PC-3 (cell line): ENCODE measurements at regions of chr19 and their contacts with region 1.

Region 1: DNA sequence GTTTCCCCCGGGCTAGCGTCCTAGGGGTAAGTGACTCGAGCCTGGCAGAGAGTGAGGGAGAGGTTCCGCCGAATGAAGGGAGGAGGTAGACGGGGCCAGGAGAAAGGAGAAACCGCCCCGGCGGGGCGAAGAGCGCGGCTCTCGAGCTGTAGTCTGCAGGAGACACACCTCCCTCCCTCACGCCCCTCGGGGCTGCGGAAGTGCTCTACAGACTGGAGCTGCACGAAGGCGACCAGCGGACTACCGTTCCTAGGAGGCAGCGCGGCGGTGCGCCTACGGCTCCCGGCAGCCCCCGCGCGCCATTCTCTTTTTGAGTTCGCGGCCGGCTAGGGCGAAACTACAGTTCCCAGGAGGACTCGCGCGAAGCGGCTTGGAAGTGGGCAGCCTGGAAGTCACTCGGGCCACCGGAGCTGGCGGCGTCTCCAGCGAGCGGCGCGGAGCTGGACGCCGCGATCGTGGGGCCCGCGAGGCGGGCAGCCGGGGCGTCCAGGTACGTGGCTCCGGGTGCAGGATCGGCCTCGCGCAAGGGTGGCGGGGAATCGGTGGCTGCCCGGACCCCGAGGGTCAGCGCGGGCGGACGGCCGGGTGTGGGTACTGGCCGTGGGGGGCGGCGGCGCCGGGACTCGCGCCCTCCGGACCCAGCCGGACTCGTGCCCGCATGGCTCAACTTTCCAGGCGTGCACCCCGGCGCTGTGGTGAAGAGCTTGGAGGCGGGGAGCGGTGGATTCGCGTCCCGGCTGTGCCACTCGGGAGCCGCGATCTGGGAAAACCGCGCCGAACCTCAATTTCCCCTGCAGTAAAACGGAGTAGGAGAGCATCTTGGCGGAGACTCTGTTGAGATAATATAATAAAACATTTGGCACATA is at the start of gene SIPA1L3:
- DNase-seq: peak; percentile 95
- ATAC-seq: peak; percentile 90
- H3K4me3 ChIP-seq: peak within 1 kb of the TSS; percentile 95
- H3K27ac ChIP-seq: peak within 1 kb of the TSS; percentile 67
- H3K4me1 ChIP-seq: peaks cover 21% of the 10 kb centered on the region
- H3K27me3 ChIP-seq: no peaks in the 10 kb centered on the region
- CTCF ChIP-seq: no peak
- total RNA-seq, gene SIPA1L3: 38.7 and 56.3 TPM in 2 replicates

Region 2: DNA sequence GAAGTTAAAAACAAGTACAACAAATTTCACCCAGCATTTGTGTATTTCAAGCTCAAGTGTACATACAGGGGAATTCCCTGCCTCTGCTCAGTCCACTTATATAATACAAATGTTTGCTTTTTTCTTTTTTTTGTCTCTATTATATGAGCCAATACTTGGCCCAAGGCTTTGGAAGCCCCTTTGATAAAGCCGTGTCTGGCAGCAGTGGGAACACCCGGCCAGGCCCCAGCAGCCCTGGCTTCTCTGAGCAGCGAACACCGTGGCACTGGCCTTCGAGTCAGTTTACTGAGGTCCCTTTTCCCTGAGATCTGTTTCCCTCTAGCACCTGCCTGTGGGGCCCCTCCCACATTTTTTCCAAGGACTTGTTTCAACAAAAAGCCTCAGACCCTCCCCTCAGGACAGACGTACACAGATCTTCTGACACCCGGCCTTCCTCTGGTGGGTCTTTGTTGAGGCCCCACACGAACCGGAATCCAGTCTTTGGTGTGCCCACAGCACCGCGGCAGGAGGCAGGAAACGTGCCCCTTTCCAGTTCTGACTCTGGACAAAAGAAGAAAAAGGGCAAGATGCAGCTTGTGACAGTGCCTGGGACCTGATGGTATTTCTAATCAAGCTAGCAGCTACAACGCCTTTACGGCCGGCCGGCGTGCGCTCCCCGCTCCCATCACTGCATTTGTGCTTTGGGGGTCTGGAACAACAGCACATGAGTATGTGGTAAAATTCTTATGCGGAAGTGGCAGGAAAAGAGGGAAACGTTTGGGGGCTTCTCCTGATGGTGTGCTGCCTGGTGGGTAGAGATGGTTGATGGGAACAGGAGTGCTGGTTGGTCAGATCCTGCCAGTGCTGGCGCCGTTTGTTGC is 13.7 kb after region 1 on chr19:
- CTCF ChIA-PET with region 1: no interaction called
- POLR2A ChIA-PET with region 1: no interaction called
- intact Hi-C with region 1: no loop called
- DNase-seq: no peak
- ATAC-seq: no peak
- H3K4me3 ChIP-seq: no peak overlapping the region
- H3K27ac ChIP-seq: no peak overlapping the region
- H3K4me1 ChIP-seq: no peaks in the 10 kb centered on the region
- H3K27me3 ChIP-seq: no peaks in the 10 kb centered on the region
- CTCF ChIP-seq: no peak

Region 3: DNA sequence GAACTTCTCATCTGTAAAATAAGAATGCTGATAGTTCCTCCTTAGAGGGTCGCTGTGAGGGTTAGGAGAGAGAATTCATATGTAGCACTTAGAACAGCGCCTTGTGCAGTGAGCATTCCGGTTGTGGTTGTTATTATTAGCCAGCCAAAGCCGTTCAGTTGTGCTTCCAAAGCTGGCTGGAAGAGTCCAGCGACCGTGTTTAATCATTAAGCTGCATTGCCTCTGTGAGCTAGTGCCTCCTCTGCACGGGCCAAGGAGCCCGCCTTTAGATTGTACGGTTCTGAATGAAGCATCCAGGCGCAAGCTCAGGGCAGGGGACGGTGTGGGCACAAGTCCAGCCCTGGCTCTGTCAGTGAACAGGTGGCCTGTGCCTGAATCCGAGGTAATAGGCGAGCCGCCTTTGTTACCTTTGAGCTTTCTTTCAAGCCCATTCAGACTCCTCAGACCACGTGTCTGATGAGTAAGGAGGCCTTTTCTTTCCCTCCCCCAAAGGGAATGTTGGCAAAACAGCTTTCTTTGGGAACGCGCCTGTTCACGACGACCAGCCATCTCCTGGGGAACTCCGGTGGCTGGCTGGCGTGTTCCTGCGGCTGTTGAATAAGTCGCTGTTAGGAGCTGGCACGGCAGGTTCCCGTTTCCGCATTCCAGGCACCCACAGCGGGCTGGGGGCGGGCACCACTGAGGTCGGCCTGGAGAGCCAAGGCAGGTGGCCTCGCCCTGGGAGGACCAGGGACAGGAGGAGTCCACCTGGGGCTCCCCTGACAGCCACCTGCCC is 25.0 kb after region 1 on chr19:
- CTCF ChIA-PET with region 1: interaction called, 3 read pairs
- POLR2A ChIA-PET with region 1: interaction called, 5 read pairs
- intact Hi-C with region 1: loop called (anchors 2 kb)
- DNase-seq: peak; percentile 92
- ATAC-seq: peak; percentile 73
- H3K4me3 ChIP-seq: peak overlapping the region; percentile 64
- H3K27ac ChIP-seq: peak overlapping the region; percentile 87
- H3K4me1 ChIP-seq: peaks cover 38% of the 10 kb centered on the region
- H3K27me3 ChIP-seq: no peaks in the 10 kb centered on the region
- CTCF ChIP-seq: no peak

Region 4: GRCh38 chr19:37997911-37998344 is 90.8 kb after region 1 on chr19:
- CTCF ChIA-PET with region 1: no interaction called
- POLR2A ChIA-PET with region 1: no interaction called
- intact Hi-C with region 1: loop called (anchors 2 kb)
- DNase-seq: peak; percentile 97
- ATAC-seq: peak; percentile 48
- H3K4me3 ChIP-seq: no peak overlapping the region
- H3K27ac ChIP-seq: peak overlapping the region; percentile 96
- H3K4me1 ChIP-seq: peaks cover 31% of the 10 kb centered on the region
- H3K27me3 ChIP-seq: no peaks in the 10 kb centered on the region
- CTCF ChIP-seq: no peak

Region 5: GRCh38 chr19:38004521-38005223 is 97.6 kb after region 1 on chr19:
- CTCF ChIA-PET with region 1: interaction called, 8 read pairs
- POLR2A ChIA-PET with region 1: interaction called, 24 read pairs
- intact Hi-C with region 1: loop called (anchors 2 kb)
- DNase-seq: peak; percentile 72
- ATAC-seq: peak; percentile 28
- H3K4me3 ChIP-seq: no peak overlapping the region; the same call in 1 of the 2 replicates
- H3K27ac ChIP-seq: peak overlapping the region; percentile 100
- H3K4me1 ChIP-seq: peaks cover 35% of the 10 kb centered on the region
- H3K27me3 ChIP-seq: no peaks in the 10 kb centered on the region
- CTCF ChIP-seq: no peak

Region 6: GRCh38 chr19:38044267-38045111 is 137.4 kb after region 1 on chr19:
- CTCF ChIA-PET with region 1: interaction called, 11 read pairs
- POLR2A ChIA-PET with region 1: no interaction called
- intact Hi-C with region 1: no loop called
- DNase-seq: peak; percentile 13
- ATAC-seq: no peak
- H3K4me3 ChIP-seq: no peak overlapping the region
- H3K27ac ChIP-seq: no peak overlapping the region
- H3K4me1 ChIP-seq: peaks cover 7% of the 10 kb centered on the region
- H3K27me3 ChIP-seq: no peaks in the 10 kb centered on the region
- CTCF ChIP-seq: peak; percentile 47

Region 7: GRCh38 chr19:38245826-38246498 is 338.9 kb after region 1 on chr19:
- CTCF ChIA-PET with region 1: no interaction called
- POLR2A ChIA-PET with region 1: interaction called, 11 read pairs
- intact Hi-C with region 1: no loop called
- DNase-seq: no peak
- ATAC-seq: no peak
- H3K4me3 ChIP-seq: no peak overlapping the region
- H3K27ac ChIP-seq: no peak overlapping the region
- H3K4me1 ChIP-seq: peaks cover 4% of the 10 kb centered on the region; the same call in 1 of the 2 replicates
- H3K27me3 ChIP-seq: no peaks in the 10 kb centered on the region
- CTCF ChIP-seq: no peak